ENCODE measurements at regions of chr11 and their contacts with region 1.

Region 1: DNA sequence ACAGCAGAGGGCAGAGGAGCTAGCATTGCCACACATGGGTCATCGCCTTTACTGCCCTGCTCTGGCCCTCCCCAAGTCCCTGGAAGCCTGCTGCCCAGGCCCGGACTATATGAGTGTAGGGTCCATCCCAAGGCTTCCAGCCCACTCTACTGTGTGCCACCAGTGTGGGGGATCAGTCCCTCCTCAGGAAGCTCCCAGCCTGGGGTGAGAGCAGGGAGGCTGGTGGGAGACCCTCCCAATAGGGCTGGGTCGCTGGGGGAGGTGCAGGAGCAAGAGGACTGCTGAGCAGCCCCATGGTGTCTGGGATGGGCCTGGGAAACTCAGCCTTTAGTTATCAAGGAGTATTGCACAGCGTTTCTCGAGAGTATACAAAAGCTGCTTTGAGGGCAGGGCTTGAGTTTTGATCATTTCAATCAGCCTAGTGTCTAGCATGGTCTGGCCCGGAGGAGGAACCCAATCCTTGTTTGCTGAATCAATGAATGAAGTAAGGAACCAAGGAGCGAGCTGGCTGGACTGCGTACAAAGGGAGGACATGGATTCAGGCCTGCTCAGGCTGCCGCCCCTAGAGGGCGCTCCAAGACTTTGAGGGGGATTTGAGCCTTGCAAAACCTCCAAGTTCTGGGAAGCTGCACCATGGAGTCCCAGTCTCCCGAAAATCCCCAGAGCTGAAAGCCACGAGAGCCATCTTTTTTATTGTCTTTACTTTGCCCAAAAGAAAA is 89.0 kb upstream of the PARVA start:
- DNase-seq: peak; percentile 78
- ATAC-seq: no peak
- H3K4me3 Mint-ChIP-seq: no peak overlapping the region
- H3K27ac Mint-ChIP-seq: no peak overlapping the region
- H3K4me1 Mint-ChIP-seq: peaks cover 14% of the 10 kb centered on the region
- H3K27me3 Mint-ChIP-seq: no peaks in the 10 kb centered on the region

Region 2: DNA sequence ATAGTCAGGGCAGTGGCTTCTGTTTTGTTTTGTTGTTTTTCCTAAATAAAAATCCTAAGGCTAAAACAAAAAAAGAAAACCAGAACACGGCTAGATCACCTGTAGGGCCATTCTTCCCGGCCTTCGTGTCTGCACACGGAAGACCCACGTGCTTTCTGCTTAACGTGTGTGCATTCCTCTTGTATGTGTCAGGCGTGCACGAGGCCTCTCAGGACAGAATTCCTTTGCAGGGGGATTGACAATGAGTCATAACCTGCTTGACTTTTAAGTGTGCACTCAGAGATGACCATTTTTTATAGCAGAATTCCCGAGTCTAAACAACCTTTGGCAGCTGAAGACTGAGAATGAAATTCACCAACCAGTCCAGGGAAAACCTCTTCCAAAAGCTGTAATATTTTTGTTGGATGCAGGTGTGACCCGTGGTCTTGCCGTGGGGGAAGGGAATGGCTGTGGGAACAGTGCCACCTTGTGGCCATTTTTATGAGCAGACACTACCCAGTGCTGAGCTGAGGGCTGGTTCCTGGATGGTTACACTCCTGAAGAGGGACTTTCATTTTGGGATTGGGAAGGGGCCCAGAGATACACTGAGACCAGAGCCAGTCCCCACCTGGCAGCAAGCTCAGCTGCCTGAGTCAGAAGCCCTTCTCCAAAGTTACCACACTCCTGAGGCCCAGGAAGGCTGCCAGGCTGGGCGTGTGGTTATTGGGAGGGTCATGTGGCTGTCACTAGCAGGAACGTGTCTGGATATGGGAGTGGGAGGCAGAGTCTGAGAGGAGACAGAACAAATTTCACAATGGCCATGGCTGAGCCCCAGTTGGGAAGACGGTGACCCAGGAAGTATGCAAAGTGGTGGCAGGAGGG is 244.2 kb before region 1 on chr11:
- CTCF ChIA-PET with region 1: interaction called, 168 read pairs
- POLR2A ChIA-PET with region 1: no interaction called
- intact Hi-C with region 1: no loop called
- DNase-seq: peak; percentile 80
- ATAC-seq: peak; percentile 73
- H3K4me3 Mint-ChIP-seq: no peak overlapping the region
- H3K27ac Mint-ChIP-seq: no peak overlapping the region
- H3K4me1 Mint-ChIP-seq: peaks cover 11% of the 10 kb centered on the region
- H3K27me3 Mint-ChIP-seq: peaks cover 4% of the 10 kb centered on the region

Region 3: DNA sequence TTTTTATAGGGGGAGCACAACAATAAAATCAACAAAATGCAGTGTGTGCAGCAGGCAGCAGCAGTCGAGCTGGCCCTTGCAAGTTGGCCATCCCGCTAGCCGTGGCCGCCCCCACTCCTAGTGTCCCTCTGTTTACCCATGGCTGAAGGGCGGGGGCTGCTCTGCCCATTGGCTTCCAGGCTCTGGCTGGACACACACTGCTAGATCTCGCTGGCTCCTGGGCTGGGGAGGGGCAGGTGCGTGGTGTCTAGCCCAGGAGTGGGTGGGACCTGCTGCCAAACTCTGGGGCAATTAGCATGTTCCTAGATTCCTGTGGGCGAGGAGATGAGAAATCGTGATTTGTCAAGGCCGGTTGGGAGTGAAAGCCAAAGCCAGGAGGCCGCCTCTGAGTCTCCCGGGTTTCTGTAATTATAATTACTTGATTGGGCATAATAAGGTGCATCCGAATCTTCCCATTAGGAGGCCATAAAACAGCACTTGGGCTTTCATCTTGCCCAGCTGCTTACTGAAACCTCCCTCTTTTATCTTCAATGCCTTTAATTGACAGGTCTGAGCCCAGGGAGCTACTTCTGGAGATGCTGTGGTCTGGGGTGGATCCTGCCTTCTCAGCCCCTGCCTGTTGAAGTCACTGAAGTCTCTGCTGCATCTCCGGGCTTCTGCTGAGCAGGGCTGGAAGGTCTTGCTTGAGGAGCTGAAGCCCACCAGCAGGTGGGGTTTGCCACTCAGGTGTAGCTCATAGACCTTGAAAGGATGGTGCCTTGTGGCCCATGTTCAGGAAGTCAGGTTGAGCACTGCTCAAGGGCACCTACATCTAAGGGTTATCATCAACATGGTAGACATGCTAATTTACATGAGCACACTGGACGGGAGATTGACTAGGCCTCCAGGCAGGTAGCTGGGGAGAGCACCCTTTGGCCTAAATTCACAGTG is 235.4 kb before region 1 on chr11:
- CTCF ChIA-PET with region 1: interaction called, 168 read pairs
- POLR2A ChIA-PET with region 1: no interaction called
- intact Hi-C with region 1: no loop called
- DNase-seq: peak; percentile 54
- ATAC-seq: peak; percentile 60
- H3K4me3 Mint-ChIP-seq: no peak overlapping the region
- H3K27ac Mint-ChIP-seq: no peak overlapping the region
- H3K4me1 Mint-ChIP-seq: peaks cover 4% of the 10 kb centered on the region
- H3K27me3 Mint-ChIP-seq: no peaks in the 10 kb centered on the region

Region 4: DNA sequence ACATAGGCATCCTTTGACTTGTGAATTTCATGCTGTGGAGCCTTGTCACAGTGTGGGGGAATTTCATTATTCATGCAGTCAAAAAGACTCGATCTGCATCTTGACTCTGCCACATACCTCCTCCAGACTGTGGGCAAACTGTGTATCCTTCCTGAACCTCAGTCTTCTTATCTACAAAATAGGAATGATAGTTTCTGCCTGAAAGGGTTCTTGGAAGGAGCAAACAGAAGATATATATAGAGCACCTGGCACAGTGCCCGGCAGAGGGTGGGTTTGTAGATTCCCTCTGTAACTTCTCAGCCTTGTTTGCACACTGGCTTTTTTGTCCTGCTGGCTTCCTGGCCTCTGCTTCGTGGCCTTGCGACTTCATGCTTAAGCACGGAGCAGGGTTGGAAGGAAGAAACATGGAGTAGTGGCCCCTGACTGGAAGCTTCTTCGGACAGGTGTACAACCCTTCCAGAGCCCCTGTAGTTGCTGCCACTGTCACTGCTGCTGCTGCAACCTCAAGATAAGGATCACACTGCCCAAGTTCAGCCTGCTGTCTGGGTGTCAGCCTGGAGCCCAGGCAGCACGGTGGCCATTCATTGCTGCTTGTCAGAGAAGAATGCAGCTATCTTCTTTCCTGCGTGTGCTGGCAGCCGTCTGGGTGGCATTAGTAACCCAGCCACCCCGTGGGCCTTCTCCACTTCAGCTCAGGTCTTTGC is 71.5 kb before region 1 on chr11:
- CTCF ChIA-PET with region 1: no interaction called
- POLR2A ChIA-PET with region 1: no interaction called
- intact Hi-C with region 1: no loop called
- DNase-seq: no peak
- ATAC-seq: no peak
- H3K4me3 Mint-ChIP-seq: no peak overlapping the region
- H3K27ac Mint-ChIP-seq: no peak overlapping the region
- H3K4me1 Mint-ChIP-seq: peaks cover 31% of the 10 kb centered on the region
- H3K27me3 Mint-ChIP-seq: no peaks in the 10 kb centered on the region

Region 5: DNA sequence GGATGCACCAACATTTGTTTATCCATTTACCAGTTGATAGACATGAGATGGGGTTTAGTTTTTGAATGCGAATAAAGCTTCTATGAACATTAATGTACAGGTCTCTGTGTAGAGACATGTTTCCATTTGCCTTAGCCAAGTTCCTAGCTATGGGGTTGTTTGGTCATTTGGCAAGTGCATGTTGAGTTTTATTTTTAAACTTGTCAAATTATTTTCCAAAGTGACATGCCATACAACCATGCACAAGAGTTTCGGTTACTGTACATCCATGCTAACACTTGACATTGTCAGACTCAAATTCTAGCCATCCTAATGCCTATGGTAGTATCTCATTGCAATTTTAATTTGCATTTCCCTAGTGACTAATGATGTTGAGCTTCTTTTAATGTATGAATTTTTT is 18.5 kb after region 1 on chr11:
- CTCF ChIA-PET with region 1: interaction called, 12 read pairs
- POLR2A ChIA-PET with region 1: no interaction called
- intact Hi-C with region 1: no loop called
- DNase-seq: no peak
- ATAC-seq: no peak
- H3K4me3 Mint-ChIP-seq: no peak overlapping the region
- H3K27ac Mint-ChIP-seq: no peak overlapping the region
- H3K4me1 Mint-ChIP-seq: no peaks in the 10 kb centered on the region
- H3K27me3 Mint-ChIP-seq: no peaks in the 10 kb centered on the region

Region 6: DNA sequence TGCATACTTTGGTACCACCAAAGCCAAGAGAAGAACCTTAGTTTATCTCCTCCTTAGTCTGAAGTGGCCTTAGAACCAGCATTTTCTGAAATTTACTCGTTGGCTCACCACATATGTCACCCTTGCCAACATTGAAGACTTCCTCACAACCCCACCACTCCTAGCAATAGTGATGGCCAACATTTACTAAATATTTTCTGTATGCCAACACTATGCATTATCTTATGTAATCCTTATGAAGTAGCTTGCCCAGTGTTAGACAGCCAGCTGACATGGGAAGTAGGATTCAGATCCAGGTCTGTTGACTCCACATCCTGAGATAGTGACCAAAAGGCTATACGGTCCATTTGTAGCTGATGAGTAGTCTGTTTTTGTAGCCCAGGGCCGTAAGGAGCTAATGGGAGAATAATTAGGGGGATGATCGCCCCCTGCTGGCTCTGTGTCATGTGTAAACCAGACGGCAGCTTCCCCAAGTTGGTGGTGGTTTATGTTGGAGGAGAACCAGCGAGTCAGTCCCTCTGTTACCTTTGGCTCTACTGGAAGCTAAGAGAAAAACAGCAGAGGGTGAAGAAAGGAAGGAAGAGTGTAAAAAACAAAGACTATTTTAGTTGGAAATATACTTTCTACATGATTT is 600.3 kb after region 1 on chr11:
- CTCF ChIA-PET with region 1: interaction called, 10 read pairs
- POLR2A ChIA-PET with region 1: interaction called, 3 read pairs
- intact Hi-C with region 1: no loop called
- DNase-seq: peak; percentile 82
- ATAC-seq: peak; percentile 33
- H3K4me3 Mint-ChIP-seq: no peak overlapping the region
- H3K27ac Mint-ChIP-seq: no peak overlapping the region
- H3K4me1 Mint-ChIP-seq: no peaks in the 10 kb centered on the region
- H3K27me3 Mint-ChIP-seq: peaks cover 4% of the 10 kb centered on the region

Region 7: DNA sequence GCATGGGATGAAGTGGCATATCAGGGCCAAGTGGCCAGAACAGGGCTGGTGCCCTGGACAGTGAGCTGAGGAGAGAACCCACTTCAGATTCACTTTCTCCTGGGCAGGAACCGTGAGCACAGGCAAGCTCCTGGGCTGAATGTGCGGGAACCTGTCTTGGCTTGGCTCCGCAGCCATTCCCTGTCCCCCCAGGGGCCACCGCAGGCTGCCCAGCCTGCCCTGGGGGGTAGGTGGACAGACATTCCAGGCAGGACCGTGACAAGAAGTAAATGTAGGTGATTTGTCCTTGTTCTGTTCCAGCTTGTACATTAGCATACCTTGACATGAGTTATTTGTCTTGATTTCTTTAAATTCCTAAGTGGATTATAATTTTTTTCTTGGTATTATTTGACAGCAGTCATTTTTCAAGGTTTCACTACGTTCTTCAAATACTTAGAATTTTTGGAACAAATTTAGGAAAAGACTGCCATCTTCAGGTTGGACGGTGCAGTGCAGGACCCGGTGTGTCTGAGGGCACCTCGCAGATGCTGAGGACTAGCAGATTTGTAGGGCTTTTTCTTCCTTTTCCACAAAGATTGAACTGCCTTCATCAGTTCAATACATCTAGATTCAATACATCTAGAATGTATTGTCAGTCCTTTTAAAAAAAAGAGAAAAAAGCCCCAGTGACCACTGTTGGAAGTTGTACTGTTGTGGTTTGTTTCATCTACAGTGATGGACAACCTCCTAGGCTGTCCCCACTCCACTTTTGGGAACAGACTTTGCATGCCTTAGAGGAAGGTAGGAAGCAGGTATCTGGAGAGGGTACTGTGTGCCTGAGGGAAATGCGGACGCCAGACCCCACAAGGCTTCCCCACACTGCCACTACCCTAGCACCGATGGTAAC is 605.7 kb after region 1 on chr11:
- CTCF ChIA-PET with region 1: interaction called, 10 read pairs
- POLR2A ChIA-PET with region 1: interaction called, 3 read pairs
- intact Hi-C with region 1: loop called in 1 of 2 experiments (anchors 2 kb)
- DNase-seq: peak; percentile 79
- ATAC-seq: no peak
- H3K4me3 Mint-ChIP-seq: no peak overlapping the region
- H3K27ac Mint-ChIP-seq: no peak overlapping the region
- H3K4me1 Mint-ChIP-seq: no peaks in the 10 kb centered on the region
- H3K27me3 Mint-ChIP-seq: peaks cover 14% of the 10 kb centered on the region